Pancreas (tissue), 10 donors: ENCODE measurements at regions of chr22 and their contacts with region 1.

Region 1: GRCh38 chr22:39674536-39674935 is 104.0 kb downstream of the CACNA1I start:
- DNase-seq: no peak
- ATAC-seq: no peak
- H3K4me3 ChIP-seq: no peak overlapping the region
- H3K27ac ChIP-seq: no peak overlapping the region
- H3K4me1 ChIP-seq: no peaks in the 10 kb centered on the region
- H3K27me3 ChIP-seq: no peaks in the 10 kb centered on the region
- CTCF ChIP-seq: no peak

Region 2: GRCh38 chr22:39097098-39098020 is 577.2 kb before region 1 on chr22 and contains the start of gene APOBEC3H:
- intact Hi-C with region 1: loop called in 1 of 3 experiments (anchors 10 kb)
- DNase-seq: no peak
- ATAC-seq: peak in 3 of 4 donors; percentile 23 to 73 (median 32)
- H3K4me3 ChIP-seq: no peak within 1 kb of the TSS
- H3K27ac ChIP-seq: no peak within 1 kb of the TSS
- H3K4me1 ChIP-seq: no peaks in the 10 kb centered on the region
- H3K27me3 ChIP-seq: no peaks in the 10 kb centered on the region
- CTCF ChIP-seq: no peak
- total RNA-seq, gene APOBEC3H: 0.17 to 0.21 TPM in 2 of 6 donors, not detected in the others